H1 (cell line): ENCODE measurements at regions of chr6 and their contacts with region 1.

Region 1: GRCh38 chr6:14001329-14002012 is 76.7 kb downstream of the RNF182 start:
- DNase-seq: no peak
- H3K4me3 ChIP-seq: no peak overlapping the region
- H3K27ac ChIP-seq: no peak overlapping the region
- H3K4me1 ChIP-seq: peaks cover 0 to 6% (median 2%) of the 10 kb centered on the region in 4 experiments; a peak in 2 of 7 replicates
- H3K27me3 ChIP-seq: no peaks in the 10 kb centered on the region; a peak in 1 of 7 replicates
- CTCF ChIP-seq: no peak
- EP300 ChIP-seq: no peak
- POLR2A ChIP-seq: no peak
- RAD21 ChIP-seq: no peak

Region 2: DNA sequence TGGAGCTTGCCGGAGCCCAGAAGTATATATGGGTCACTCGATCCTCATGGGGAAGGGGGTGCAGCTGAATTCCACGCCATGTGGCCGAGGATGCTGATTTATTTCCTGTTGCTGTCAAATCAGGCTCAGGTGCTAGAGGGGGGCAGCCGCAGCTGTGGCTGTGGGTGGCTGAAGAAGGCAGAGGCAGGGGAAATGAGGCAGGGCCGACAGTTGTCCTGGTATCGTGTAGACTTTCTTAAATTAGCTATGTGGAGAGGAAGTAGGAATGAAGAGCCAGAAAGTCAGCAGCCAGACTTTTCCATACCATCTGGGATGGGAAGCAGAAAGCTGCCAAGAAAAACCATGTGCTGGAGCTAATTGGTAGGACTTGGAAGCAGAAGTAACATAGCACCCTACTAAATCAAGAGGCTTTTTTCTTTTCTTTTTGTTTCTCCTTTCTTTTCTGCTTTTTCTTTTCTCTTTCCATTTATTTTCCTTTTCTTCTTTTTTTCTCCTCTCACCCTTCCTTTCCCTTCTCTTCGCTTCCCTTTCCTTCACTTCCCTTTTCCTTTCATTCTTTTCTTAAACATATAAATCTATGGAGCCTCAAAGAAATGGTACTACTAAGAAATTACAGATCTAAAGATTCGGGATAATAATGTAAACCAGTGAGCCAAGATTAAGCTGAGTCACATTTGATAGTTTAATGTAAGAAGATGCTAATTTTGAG is 25.5 kb after region 1 on chr6:
- CTCF ChIA-PET with region 1: interaction called, 11 read pairs
- POLR2A ChIA-PET with region 1: no interaction called
- DNase-seq: no peak
- H3K4me3 ChIP-seq: no peak overlapping the region
- H3K27ac ChIP-seq: no peak overlapping the region
- H3K4me1 ChIP-seq: peaks cover 3 to 13% (median 7%) of the 10 kb centered on the region in 4 experiments
- H3K27me3 ChIP-seq: peaks cover 0 to 2% (median 0%) of the 10 kb centered on the region in 4 experiments; a peak in 2 of 7 replicates
- CTCF ChIP-seq: no peak
- EP300 ChIP-seq: no peak
- POLR2A ChIP-seq: no peak
- RAD21 ChIP-seq: no peak

Region 3: DNA sequence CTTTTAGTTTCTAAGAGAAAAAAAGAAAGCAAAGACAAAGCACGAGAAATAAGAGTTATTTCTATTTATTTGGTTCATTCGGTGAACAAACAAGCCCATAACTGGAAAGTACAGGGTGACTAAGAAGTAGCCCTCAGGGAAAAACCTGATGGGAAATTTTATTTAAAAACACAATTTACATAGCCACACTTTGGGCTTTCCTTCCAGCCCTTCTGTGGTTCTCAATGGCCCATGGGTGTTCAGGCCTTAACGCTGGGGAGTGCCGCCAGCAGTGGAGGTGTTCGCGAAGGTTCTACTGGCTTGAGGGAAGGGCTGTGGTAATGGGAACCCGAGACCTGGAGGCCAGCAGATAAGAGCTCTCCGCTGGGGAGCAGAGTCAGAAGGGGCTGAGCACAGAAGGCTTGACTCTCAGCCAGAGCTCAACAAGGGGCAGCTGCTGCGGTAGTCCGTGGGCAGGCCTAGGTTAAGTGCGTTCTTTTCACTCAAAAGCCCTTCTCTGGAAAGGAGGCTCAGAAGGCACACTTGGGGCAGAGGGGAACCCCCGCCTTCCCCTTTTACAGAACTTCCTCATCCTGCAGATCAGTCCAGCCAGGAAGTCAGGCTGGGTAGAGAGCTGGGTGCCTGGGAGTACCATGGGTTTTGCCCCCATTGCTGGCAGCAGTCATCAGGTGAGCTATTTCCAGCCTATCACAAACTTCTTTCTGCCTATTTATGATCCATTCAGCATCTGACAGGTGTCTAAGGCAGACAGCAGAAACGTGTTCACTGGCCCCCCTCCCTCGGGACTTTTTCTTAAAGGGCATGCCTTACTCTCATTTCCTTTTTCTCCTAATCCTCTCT is 107.3 kb after region 1 on chr6:
- CTCF ChIA-PET with region 1: no interaction called
- POLR2A ChIA-PET with region 1: no interaction called
- DNase-seq: no peak
- H3K4me3 ChIP-seq: no peak overlapping the region
- H3K27ac ChIP-seq: no peak overlapping the region
- H3K4me1 ChIP-seq: no peaks in the 10 kb centered on the region; a peak in 1 of 7 replicates
- H3K27me3 ChIP-seq: no peaks in the 10 kb centered on the region
- CTCF ChIP-seq: no peak
- EP300 ChIP-seq: no peak
- POLR2A ChIP-seq: no peak
- RAD21 ChIP-seq: no peak